Motor neuron (in vitro differentiated cells): ENCODE measurements at regions of chr7 and their contacts with region 1.

Region 1: DNA sequence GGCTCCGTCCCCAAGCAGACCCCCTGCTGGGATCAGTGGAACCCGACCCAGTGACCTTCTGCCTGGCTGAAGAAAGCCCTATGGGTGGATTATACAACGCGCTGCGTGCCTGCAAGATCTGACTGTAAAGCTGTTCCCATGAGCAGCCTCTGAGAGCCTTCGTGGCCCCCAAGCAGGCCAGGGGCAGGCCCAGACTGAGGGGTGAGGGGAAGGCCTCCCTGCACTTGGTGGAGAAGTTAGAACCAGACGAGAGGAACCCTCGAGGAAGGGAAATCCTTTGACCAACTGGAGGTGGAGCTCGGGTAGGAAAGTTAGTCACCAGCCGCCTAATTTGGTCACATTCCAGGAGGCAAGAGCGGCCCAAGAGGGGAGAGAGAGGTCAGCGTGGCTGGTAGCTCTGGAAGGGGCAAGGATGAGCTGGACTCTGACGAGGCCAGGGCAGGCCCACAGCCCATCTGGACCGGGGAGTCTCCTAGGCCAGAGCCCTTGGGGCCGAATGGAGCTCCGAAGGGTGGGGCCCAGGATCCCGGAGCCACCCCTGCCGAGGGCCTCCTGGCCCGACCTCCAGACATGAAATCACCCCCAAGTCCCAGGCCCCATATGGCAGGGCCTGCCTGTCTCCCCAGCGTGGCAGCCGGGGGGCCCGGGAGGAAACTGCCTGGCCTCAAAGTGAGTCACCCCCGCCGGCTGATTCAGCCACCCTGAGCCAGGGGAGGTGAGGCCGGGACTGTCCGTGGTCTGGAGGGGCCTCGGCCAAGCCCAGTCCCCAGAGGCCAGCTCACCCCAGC is 23.3 kb upstream of the PDGFA start:
- ATAC-seq: peak in 3 of 8 experiments; percentile 3 to 70 (median 63)
- H3K4me3 ChIP-seq: no peak overlapping the region
- H3K27ac ChIP-seq: no peak overlapping the region
- H3K4me1 ChIP-seq: peaks cover 0 to 4% of the 10 kb centered on the region in 2 donors

Region 2: GRCh38 chr7:214410-215212 is 328.3 kb before region 1 on chr7:
- in situ Hi-C with region 1: no loop called
- ATAC-seq: peak in 4 of 8 experiments; percentile 13 to 55 (median 30)
- H3K4me3 ChIP-seq: no peak overlapping the region
- H3K27ac ChIP-seq: no peak overlapping the region
- H3K4me1 ChIP-seq: peaks cover 28 to 32% of the 10 kb centered on the region in 2 donors

Region 3: GRCh38 chr7:712381-713138 is 169.7 kb after region 1 on chr7:
- in situ Hi-C with region 1: loop called in 1 of 9 experiments (anchors 25 kb)
- ATAC-seq: peak in 6 of 8 experiments; percentile 42 to 80 (median 76)
- H3K4me3 ChIP-seq: peak overlapping the region; percentile 44 to 81 (median 68)
- H3K27ac ChIP-seq: peak overlapping the region; percentile 55 to 60
- H3K4me1 ChIP-seq: peaks cover 12% of the 10 kb centered on the region in 2 donors

Region 4: GRCh38 chr7:749140-749551 is 206.2 kb after region 1 on chr7:
- in situ Hi-C with region 1: no loop called
- ATAC-seq: no peak
- H3K4me3 ChIP-seq: no peak overlapping the region
- H3K27ac ChIP-seq: no peak overlapping the region
- H3K4me1 ChIP-seq: no peaks in the 10 kb centered on the region

Region 5: GRCh38 chr7:1024331-1024841 is 481.5 kb after region 1 on chr7:
- in situ Hi-C with region 1: no loop called
- ATAC-seq: no peak
- H3K4me3 ChIP-seq: no peak overlapping the region
- H3K27ac ChIP-seq: no peak overlapping the region
- H3K4me1 ChIP-seq: peaks cover 19 to 26% of the 10 kb centered on the region in 2 donors